ENCODE measurements at regions of chr12 and their contacts with region 1.

Region 1: DNA sequence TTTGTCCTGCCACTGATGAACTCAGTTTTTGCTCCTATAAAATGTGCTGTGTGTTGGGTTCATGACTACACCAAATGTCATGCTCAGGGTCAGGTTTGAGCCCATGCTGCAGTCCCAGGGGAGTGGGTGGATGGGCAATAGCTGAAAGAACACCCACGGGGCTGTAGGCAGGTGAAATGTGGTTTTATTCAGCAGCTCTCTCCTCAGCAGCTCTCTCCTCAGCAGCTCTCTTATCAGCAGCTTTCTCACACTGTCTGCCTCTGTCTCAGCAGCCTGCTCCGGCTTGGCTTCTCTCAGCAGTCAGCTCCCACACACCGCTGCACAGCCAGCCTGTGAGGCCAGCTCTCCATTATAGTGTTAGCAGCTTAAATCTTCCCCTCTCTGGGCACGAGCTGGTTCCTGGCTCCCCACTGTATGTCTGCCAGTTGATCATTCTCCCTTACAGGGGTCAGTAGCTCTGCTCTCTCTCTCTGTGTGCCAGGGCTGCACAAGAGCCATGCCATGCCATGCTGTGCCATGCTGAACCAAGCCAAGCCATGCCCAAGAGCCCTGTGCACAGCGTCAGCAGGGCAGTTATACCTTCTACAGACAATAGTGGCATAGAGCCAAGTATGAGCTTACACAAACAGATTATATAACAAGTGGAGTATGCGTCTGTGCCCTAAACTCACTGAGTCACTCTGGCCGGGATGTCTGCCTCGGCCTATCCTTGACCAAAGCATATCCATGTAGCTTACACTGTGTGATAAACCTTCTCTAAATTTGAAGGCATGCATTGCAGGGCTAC is 303.3 kb upstream of the TMPO start:
- DNase-seq: no peak
- ATAC-seq: peak; percentile 84
- H3K4me3 ChIP-seq: no peak overlapping the region
- H3K27ac ChIP-seq: no peak overlapping the region
- H3K4me1 ChIP-seq: no peaks in the 10 kb centered on the region
- H3K27me3 ChIP-seq: no peaks in the 10 kb centered on the region; a peak in 1 of 4 replicates
- CTCF ChIP-seq: no peak
- EP300 ChIP-seq: peak; percentile 9 to 18; a peak in 1 of 4 replicates
- POLR2A ChIP-seq: no peak
- RAD21 ChIP-seq: no peak

Region 2: DNA sequence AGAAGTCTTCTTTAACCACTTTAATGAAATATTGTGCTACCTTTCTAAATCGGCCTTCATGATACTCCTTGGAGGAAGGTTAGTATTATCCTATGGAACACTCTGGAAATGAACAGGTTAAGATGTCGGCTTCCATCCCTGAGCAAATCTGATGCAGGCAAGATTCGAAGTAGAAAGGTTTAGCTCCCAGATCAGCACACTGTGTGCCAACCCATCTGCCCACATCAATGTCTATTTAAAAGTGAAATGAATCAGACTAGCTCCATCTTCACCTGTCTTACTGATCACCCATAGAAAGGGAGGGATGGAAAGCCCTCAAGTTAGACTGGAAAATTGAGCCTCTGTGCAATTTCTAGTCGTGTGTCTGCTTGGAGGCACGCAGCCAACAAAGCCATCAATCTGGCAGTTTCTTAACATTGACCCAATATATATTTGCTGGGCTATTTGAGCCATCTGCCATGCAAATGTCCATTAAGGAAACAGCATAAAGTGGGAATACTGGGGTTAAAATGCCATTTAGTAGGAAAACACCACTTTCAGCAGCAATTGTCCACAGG is 243.4 kb before region 1 on chr12:
- CTCF ChIA-PET with region 1: no interaction called
- POLR2A ChIA-PET with region 1: no interaction called
- RAD21 ChIA-PET with region 1: no interaction called
- SMC1A ChIA-PET with region 1: no interaction called
- in situ Hi-C with region 1: no loop called
- intact Hi-C with region 1: no loop called
- DNase-seq: no peak
- ATAC-seq: no peak
- H3K4me3 ChIP-seq: no peak overlapping the region
- H3K27ac ChIP-seq: no peak overlapping the region
- H3K4me1 ChIP-seq: no peaks in the 10 kb centered on the region
- H3K27me3 ChIP-seq: no peaks in the 10 kb centered on the region
- CTCF ChIP-seq: no peak
- EP300 ChIP-seq: no peak
- POLR2A ChIP-seq: no peak
- RAD21 ChIP-seq: no peak

Region 3: GRCh38 chr12:98352218-98352811 is 140.2 kb after region 1 on chr12:
- CTCF ChIA-PET with region 1: no interaction called
- POLR2A ChIA-PET with region 1: interaction called, 14 read pairs
- RAD21 ChIA-PET with region 1: no interaction called
- SMC1A ChIA-PET with region 1: no interaction called
- in situ Hi-C with region 1: no loop called
- intact Hi-C with region 1: no loop called
- DNase-seq: no peak
- ATAC-seq: peak; percentile 82
- H3K4me3 ChIP-seq: no peak overlapping the region
- H3K27ac ChIP-seq: no peak overlapping the region
- H3K4me1 ChIP-seq: peaks cover 4% of the 10 kb centered on the region; the same call in 1 of the 2 replicates
- H3K27me3 ChIP-seq: no peaks in the 10 kb centered on the region
- CTCF ChIP-seq: no peak
- EP300 ChIP-seq: peak in 1 of 2 experiments; percentile 24; a peak in 1 of 4 replicates
- POLR2A ChIP-seq: no peak
- RAD21 ChIP-seq: no peak

Measured in GM12878 (cell line).